AG04450 (cell line): ENCODE measurements at regions of chr4 and their contacts with region 1.

Region 1: DNA sequence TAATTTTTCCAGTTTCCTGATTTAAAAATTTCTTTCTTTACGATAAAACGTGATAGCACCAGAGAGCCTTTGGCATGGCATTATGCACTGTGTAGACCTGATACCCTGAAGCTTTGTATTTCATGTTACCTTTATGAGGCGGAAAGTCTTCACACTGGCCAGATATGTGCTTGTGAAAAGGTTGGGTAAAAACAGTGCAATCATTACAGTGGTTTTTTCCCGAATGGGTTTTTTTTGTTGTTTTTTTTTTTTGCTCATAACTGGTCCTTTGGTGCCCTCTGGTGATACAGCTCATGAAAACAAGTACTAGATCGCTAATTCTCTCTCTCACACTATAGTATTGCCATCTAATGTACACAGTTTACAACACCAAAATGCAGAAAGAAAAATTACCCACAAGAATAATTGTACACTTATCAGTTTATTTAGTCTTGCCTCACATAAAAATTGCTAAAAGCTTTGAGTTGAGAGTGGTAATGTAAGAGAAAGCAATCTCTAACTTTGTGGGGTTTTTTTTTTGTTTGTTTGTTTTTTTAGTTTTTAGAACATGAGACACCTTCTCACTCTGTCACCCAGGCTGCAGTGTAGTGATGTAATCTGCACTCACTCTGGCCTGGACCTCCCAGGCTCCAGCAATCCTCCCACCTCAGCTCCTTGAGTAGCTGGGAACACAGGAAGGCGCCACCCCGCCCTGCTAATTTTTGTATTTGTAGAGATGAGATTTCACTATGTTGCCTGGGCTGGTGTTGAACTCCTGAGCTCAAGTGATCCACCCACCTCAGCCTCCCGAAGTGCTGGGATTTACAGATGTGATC is 21.3 kb downstream of the SPCS3 start:
- DNase-seq: no peak
- H3K4me3 ChIP-seq: no peak overlapping the region
- H3K27ac ChIP-seq: no peak overlapping the region
- H3K27me3 ChIP-seq: no peaks in the 10 kb centered on the region
- CTCF ChIP-seq: peak; percentile 65

Region 2: GRCh38 chr4:176034499-176034898 is 306.6 kb before region 1 on chr4:
- CTCF ChIA-PET with region 1: interaction called, 111 read pairs
- POLR2A ChIA-PET with region 1: no interaction called
- DNase-seq: peak; percentile 16
- H3K4me3 ChIP-seq: no peak overlapping the region
- H3K27ac ChIP-seq: no peak overlapping the region
- H3K27me3 ChIP-seq: no peaks in the 10 kb centered on the region
- CTCF ChIP-seq: peak; percentile 43

Region 3: GRCh38 chr4:176099314-176099713 is 241.8 kb before region 1 on chr4:
- CTCF ChIA-PET with region 1: interaction called, 13 read pairs
- POLR2A ChIA-PET with region 1: no interaction called
- DNase-seq: no peak
- H3K4me3 ChIP-seq: no peak overlapping the region
- H3K27ac ChIP-seq: no peak overlapping the region
- H3K27me3 ChIP-seq: no peaks in the 10 kb centered on the region
- CTCF ChIP-seq: peak; percentile 37

Region 4: GRCh38 chr4:176277162-176277904 is 63.7 kb before region 1 on chr4:
- CTCF ChIA-PET with region 1: interaction called, 10 read pairs
- POLR2A ChIA-PET with region 1: no interaction called
- DNase-seq: peak; percentile 43
- H3K4me3 ChIP-seq: no peak overlapping the region
- H3K27ac ChIP-seq: no peak overlapping the region
- H3K27me3 ChIP-seq: no peaks in the 10 kb centered on the region
- CTCF ChIP-seq: peak; percentile 75

Region 5: DNA sequence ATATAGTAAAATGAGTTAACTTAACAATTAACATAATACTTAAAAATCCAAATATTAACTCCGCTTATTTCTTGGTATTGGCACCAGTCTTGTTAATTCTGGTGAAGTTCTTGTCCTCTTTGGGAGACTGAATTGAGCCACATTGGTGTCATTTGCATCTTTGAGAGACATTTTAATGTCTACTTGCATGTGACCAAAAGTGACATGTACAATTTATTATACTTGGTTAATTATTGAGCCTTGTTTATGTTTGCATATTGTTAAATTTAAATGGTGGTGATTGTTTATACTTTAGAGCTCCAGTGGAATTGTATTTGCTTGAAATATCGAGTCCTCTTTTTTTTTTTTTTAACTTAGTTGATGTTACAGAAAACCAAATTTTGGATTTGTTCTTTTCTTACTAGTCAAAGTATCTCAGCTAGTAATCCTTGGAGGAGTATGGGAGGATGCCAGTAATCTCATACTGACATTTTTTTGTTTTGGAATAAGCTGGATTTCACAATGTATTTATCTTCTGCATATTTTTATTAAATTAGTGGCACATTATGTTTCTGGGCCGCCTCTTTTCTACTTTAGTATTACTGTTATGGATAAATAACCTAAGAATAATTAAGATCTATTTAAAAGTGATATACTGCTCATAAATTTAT is 17.4 kb before region 1 on chr4:
- CTCF ChIA-PET with region 1: interaction called, 20 read pairs
- POLR2A ChIA-PET with region 1: no interaction called
- DNase-seq: no peak
- H3K4me3 ChIP-seq: no peak overlapping the region; the same call in 1 of the 2 replicates
- H3K27ac ChIP-seq: no peak overlapping the region
- H3K27me3 ChIP-seq: no peaks in the 10 kb centered on the region
- CTCF ChIP-seq: no peak